Mammary epithelial cell (primary cell): ENCODE measurements at regions of chr7 and their contacts with region 1.

Region 1: GRCh38 chr7:101085162-101085987 is at the start of gene TRIM56:
- DNase-seq: peak; percentile 100
- H3K4me3 ChIP-seq: peak within 1 kb of the TSS; percentile 60 to 87 (median 66)
- H3K27ac ChIP-seq: peak within 1 kb of the TSS; percentile 91
- H3K4me1 ChIP-seq: peaks cover 22% of the 10 kb centered on the region
- H3K27me3 ChIP-seq: no peaks in the 10 kb centered on the region
- CTCF ChIP-seq: no peak
- total RNA-seq, gene TRIM56: 16.3 to 30.8 TPM

Region 2: GRCh38 chr7:101099969-101100781 is 14.8 kb after region 1 on chr7:
- CTCF ChIA-PET with region 1: no interaction called
- dilution Hi-C with region 1: no loop called
- in situ Hi-C with region 1: no loop called
- intact Hi-C with region 1: loop called (anchors 2 kb)
- DNase-seq: peak; percentile 98
- H3K4me3 ChIP-seq: no peak overlapping the region
- H3K27ac ChIP-seq: peak overlapping the region; percentile 75
- H3K4me1 ChIP-seq: peaks cover 30% of the 10 kb centered on the region
- H3K27me3 ChIP-seq: no peaks in the 10 kb centered on the region
- CTCF ChIP-seq: no peak

Region 3: GRCh38 chr7:101299511-101300464 is 214.4 kb after region 1 on chr7:
- CTCF ChIA-PET with region 1: no interaction called
- dilution Hi-C with region 1: no loop called
- in situ Hi-C with region 1: no loop called
- intact Hi-C with region 1: no loop called
- DNase-seq: no peak
- H3K4me3 ChIP-seq: no peak overlapping the region
- H3K27ac ChIP-seq: no peak overlapping the region
- H3K4me1 ChIP-seq: no peaks in the 10 kb centered on the region
- H3K27me3 ChIP-seq: peaks cover 39% of the 10 kb centered on the region
- CTCF ChIP-seq: no peak